SK-N-SH (cell line): ENCODE measurements at regions of chr12 and their contacts with region 1.

Region 1: GRCh38 chr12:57452937-57453509 is 2.1 kb upstream of the INHBE start:
- DNase-seq: peak; percentile 81
- H3K4me3 ChIP-seq: no peak overlapping the region
- H3K27ac ChIP-seq: no peak overlapping the region
- H3K4me1 ChIP-seq: peaks cover 6 to 16% of the 10 kb centered on the region in 2 experiments; a peak in 2 of 4 replicates
- H3K27me3 ChIP-seq: no peaks in the 10 kb centered on the region
- CTCF ChIP-seq: peak; percentile 90
- EP300 ChIP-seq: no peak
- RAD21 ChIP-seq: peak; percentile 97

Region 2: DNA sequence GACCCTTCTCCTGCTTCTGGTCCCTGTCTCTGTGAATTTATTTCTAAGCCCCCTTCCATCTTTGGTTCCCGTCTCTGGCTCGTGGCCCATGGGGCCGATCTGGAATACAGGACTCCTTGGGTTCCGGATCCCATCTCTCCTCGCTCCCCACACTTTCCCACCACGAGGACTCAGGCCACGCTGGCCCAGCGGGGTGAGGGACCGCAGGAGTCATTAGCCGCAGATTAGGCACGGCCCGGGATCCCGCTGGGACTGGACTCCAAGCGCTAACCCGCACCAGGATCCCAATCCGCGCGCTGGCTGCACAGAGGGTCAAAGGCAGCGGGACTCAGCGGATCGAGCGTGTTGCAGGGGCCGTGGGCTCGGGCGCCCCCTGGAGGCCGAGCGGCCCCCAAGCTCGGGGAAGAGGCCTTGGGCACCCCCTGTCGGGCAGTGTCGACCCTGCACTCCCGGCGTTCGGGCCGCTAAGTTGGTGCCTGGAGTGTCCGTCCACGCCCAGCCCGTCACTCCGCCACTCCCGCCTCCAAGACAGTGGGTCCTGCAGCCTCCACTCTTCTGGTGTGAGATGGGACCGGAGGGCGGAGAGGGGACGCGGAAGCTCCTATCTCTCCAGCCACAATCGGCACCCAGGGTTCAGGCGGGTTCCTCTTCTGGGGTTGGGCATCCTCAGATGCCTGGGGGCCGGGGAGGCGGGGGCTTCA is 214.0 kb before region 1 on chr12:
- CTCF ChIA-PET with region 1: interaction called, 81 read pairs
- POLR2A ChIA-PET with region 1: no interaction called
- DNase-seq: peak; percentile 98
- H3K4me3 ChIP-seq: peak overlapping the region; percentile 58 to 72
- H3K27ac ChIP-seq: peak overlapping the region in 1 of 2 experiments; percentile 64; a peak in 1 of 4 replicates
- H3K4me1 ChIP-seq: peaks cover 23 to 58% of the 10 kb centered on the region in 2 experiments; a peak in 2 of 4 replicates
- H3K27me3 ChIP-seq: peaks cover 19% of the 10 kb centered on the region; the same call in 1 of the 2 replicates
- CTCF ChIP-seq: peak; percentile 99
- EP300 ChIP-seq: no peak
- RAD21 ChIP-seq: peak; percentile 80

Region 3: DNA sequence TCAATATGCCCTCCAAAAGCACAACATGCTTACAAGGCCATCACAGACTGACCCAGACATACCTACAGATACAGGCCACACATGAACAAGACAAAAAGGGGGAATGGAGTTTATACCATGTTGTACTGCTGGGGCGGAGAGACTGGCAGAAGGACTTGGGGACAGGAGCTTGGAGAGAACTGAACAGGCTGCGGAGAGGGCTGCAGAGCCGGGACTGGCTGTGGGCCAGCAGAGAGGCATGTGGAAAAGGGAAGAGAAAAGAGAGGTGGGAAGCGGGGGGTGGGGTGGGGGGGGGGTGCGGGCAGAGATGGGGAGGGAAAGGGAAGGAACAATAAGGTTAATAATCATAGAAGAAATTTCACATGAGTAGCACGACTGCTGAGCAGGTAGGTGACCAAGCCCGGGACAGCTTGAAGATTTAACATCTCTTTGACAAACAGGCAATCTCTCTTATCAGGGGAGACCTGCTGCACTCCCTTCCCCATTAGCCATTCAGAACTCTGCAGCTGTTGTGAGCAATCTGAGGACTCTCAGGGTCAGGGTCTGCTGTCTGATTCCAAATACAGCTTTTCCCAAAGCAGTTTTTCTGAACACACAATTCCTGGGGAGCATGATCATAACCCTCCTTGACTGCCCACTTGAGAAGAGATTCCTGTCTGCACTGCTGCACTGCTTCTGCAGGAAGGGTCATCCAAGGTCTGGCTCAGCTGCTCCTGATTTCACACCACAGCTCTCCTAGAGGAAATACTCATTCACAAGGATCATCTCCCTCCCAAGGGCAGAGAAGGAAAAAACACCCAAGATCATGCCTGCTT is 180.5 kb before region 1 on chr12:
- CTCF ChIA-PET with region 1: interaction called, 141 read pairs
- POLR2A ChIA-PET with region 1: no interaction called
- DNase-seq: peak; percentile 49
- H3K4me3 ChIP-seq: no peak overlapping the region
- H3K27ac ChIP-seq: peak overlapping the region; percentile 30 to 64; a peak in 2 of 4 replicates
- H3K4me1 ChIP-seq: peaks cover 7 to 12% of the 10 kb centered on the region in 2 experiments; a peak in 2 of 4 replicates
- H3K27me3 ChIP-seq: no peaks in the 10 kb centered on the region
- CTCF ChIP-seq: no peak
- EP300 ChIP-seq: no peak
- RAD21 ChIP-seq: no peak

Region 4: GRCh38 chr12:57296291-57296690 is 156.7 kb before region 1 on chr12:
- CTCF ChIA-PET with region 1: interaction called, 391 read pairs
- POLR2A ChIA-PET with region 1: no interaction called
- DNase-seq: no peak
- H3K4me3 ChIP-seq: no peak overlapping the region
- H3K27ac ChIP-seq: no peak overlapping the region
- H3K4me1 ChIP-seq: no peaks in the 10 kb centered on the region
- H3K27me3 ChIP-seq: no peaks in the 10 kb centered on the region
- CTCF ChIP-seq: no peak
- EP300 ChIP-seq: no peak
- RAD21 ChIP-seq: no peak

Region 5: GRCh38 chr12:57340104-57340503 is 112.9 kb before region 1 on chr12:
- CTCF ChIA-PET with region 1: interaction called, 15 read pairs
- POLR2A ChIA-PET with region 1: no interaction called
- DNase-seq: no peak
- H3K4me3 ChIP-seq: no peak overlapping the region
- H3K27ac ChIP-seq: no peak overlapping the region
- H3K4me1 ChIP-seq: peaks cover 2 to 13% of the 10 kb centered on the region in 2 experiments; a peak in 2 of 4 replicates
- H3K27me3 ChIP-seq: no peaks in the 10 kb centered on the region
- CTCF ChIP-seq: no peak
- EP300 ChIP-seq: no peak
- RAD21 ChIP-seq: no peak

Region 6: GRCh38 chr12:57430931-57431720 is 21.9 kb before region 1 on chr12 and contains the start of gene R3HDM2:
- CTCF ChIA-PET with region 1: interaction called, 12 read pairs
- POLR2A ChIA-PET with region 1: no interaction called
- DNase-seq: peak; percentile 98
- H3K4me3 ChIP-seq: peak within 1 kb of the TSS; percentile 56 to 67
- H3K27ac ChIP-seq: peak within 1 kb of the TSS; percentile 75 to 84
- H3K4me1 ChIP-seq: peaks cover 0 to 3% of the 10 kb centered on the region in 2 experiments; a peak in 1 of 4 replicates
- H3K27me3 ChIP-seq: no peaks in the 10 kb centered on the region
- CTCF ChIP-seq: no peak
- EP300 ChIP-seq: no peak; a peak in 1 of 4 replicates
- RAD21 ChIP-seq: no peak
- polyA plus RNA-seq, gene R3HDM2: 16.3 and 23.1 TPM in 2 replicates

Region 7: DNA sequence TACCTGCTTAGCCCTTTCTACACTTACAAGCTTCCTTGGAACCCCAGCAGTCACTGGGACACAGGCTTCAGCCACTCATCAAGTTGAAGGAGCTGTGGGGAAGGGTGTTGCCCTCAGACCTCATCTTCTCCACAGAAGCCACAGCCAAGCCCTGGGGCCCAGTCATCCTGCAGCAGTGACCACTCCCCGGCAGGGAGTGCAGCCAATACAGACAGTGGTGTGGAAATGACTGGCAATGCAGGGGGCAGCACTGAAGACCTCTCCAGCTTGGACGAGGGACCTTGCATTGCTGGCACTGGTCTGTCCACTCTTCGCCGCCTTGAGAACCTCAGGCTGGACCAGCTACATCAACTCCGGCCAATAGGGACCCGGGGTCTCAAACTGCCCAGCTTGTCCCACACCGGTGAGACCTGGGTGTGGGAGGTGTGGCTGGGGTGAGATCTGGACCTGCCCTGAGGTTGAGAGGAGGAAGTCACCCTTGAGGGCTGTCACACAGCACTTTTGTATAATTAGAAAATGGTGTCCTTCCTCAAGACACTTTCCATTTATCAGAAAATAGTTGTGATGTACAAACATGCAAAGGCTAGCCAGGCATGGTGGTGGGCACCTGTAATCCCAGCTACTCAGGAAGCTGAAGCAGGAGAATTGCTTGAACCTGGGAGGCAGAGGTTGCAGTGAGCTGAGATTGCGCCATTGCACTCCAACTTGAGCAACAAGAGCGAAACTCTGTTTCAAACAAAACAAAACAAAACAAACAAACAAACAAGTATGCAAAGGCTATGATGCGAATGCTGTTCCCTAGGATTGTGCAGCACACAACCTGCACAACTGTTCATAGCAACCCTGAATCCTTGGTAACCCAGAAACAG is 16.5 kb after region 1 on chr12:
- CTCF ChIA-PET with region 1: interaction called, 74 read pairs
- POLR2A ChIA-PET with region 1: no interaction called
- DNase-seq: no peak
- H3K4me3 ChIP-seq: no peak overlapping the region
- H3K27ac ChIP-seq: no peak overlapping the region
- H3K4me1 ChIP-seq: no peaks in the 10 kb centered on the region
- H3K27me3 ChIP-seq: peaks cover 82% of the 10 kb centered on the region
- CTCF ChIP-seq: no peak
- EP300 ChIP-seq: no peak
- RAD21 ChIP-seq: no peak

Region 8: GRCh38 chr12:57496822-57497221 is 43.8 kb after region 1 on chr12:
- CTCF ChIA-PET with region 1: no interaction called
- POLR2A ChIA-PET with region 1: no interaction called
- DNase-seq: no peak
- H3K4me3 ChIP-seq: no peak overlapping the region
- H3K27ac ChIP-seq: no peak overlapping the region
- H3K4me1 ChIP-seq: no peaks in the 10 kb centered on the region
- H3K27me3 ChIP-seq: no peaks in the 10 kb centered on the region
- CTCF ChIP-seq: no peak
- EP300 ChIP-seq: no peak
- RAD21 ChIP-seq: no peak